Endothelial cell of umbilical vein (primary cell): ENCODE measurements at regions of chr5 and their contacts with region 1.

Region 1: GRCh38 chr5:75336625-75337339 is at the start of gene HMGCR:
- DNase-seq: peak; percentile 99
- H3K4me3 ChIP-seq: peak within 1 kb of the TSS; percentile 69 to 97 (median 82)
- H3K27ac ChIP-seq: peak within 1 kb of the TSS; percentile 60
- H3K4me1 ChIP-seq: peaks cover 26% of the 10 kb centered on the region
- H3K27me3 ChIP-seq: no peaks in the 10 kb centered on the region
- CTCF ChIP-seq: peak in 1 of 2 donors; percentile 16
- POLR2A ChIP-seq: peak; percentile 77
- total RNA-seq, gene HMGCR: 104 and 128 TPM in 2 replicates

Region 2: GRCh38 chr5:74934949-74935751 is 401.6 kb before region 1 on chr5:
- CTCF ChIA-PET with region 1: no interaction called
- POLR2A ChIA-PET with region 1: no interaction called
- dilution Hi-C with region 1: no loop called
- intact Hi-C with region 1: loop called (anchors 2 kb)
- DNase-seq: peak; percentile 95
- H3K4me3 ChIP-seq: peak overlapping the region in 1 of 3 experiments; percentile 6
- H3K27ac ChIP-seq: peak overlapping the region; percentile 13
- H3K4me1 ChIP-seq: peaks cover 24% of the 10 kb centered on the region
- H3K27me3 ChIP-seq: no peaks in the 10 kb centered on the region
- CTCF ChIP-seq: peak; percentile 23 to 37
- POLR2A ChIP-seq: no peak

Region 3: GRCh38 chr5:75358117-75358516 is 21.3 kb after region 1 on chr5:
- CTCF ChIA-PET with region 1: interaction called, 3 read pairs
- POLR2A ChIA-PET with region 1: no interaction called
- dilution Hi-C with region 1: no loop called
- intact Hi-C with region 1: loop called (anchors 1 kb)
- DNase-seq: no peak
- H3K4me3 ChIP-seq: no peak overlapping the region
- H3K27ac ChIP-seq: no peak overlapping the region
- H3K4me1 ChIP-seq: no peaks in the 10 kb centered on the region
- H3K27me3 ChIP-seq: no peaks in the 10 kb centered on the region
- CTCF ChIP-seq: no peak
- POLR2A ChIP-seq: no peak

Region 4: DNA sequence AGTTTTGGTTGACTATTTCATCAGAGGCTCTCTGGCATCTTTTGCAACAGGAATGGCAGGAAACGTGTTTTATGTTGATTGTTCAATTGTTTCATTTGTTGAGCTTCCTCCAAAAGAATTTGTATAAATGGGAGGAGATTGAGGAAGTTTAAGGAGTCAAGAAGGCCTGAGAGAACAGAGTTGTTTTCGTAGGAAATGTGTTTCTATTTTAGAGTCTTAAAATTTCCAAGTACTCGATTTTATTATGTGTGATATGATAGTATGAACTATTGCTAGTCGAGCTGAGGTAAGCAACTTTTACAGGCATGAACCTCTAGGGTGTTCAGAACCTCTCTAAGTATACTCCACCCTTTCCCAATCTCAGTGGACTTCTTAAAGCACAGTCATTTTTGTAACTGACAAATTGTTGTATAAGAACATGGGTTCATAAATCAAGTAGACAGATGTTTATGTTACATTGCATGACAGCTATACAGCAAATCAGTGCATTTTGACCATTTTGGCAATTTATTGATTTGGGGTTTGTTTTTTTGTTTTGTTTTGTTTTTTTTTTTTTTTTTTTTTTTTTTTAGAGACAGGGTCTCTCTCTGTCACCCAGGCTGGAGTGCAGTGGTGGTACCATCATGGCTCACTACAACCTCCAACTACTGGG is 222.3 kb after region 1 on chr5:
- CTCF ChIA-PET with region 1: no interaction called
- POLR2A ChIA-PET with region 1: no interaction called
- dilution Hi-C with region 1: no loop called
- intact Hi-C with region 1: loop called (anchors 2 kb)
- DNase-seq: peak; percentile 94
- H3K4me3 ChIP-seq: peak overlapping the region in 2 of 3 experiments; percentile 28 to 64
- H3K27ac ChIP-seq: peak overlapping the region; percentile 91
- H3K4me1 ChIP-seq: peaks cover 28% of the 10 kb centered on the region
- H3K27me3 ChIP-seq: no peaks in the 10 kb centered on the region
- CTCF ChIP-seq: no peak
- POLR2A ChIP-seq: no peak

Region 5: DNA sequence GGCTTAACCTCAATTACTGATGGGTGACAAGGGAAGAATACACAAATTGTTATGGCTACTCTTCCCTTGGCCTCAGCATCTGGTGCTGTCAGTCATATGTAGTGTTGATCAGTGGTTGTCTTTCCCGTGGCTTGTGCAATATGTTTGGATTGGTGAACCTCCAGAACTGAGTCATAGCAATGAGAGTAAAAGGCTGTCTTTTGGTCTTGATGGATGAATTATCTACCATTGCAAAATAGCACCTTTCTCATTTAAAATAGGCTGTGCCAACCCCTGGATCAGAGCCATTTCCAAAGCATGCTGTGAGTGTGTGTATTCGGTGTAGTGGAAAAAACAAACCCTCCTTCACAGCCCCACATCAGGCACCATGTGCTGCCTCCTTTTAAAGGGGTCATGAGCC is 1364.5 kb after region 1 on chr5:
- CTCF ChIA-PET with region 1: no interaction called
- POLR2A ChIA-PET with region 1: no interaction called
- dilution Hi-C with region 1: no loop called
- intact Hi-C with region 1: loop called (anchors 5 kb)
- DNase-seq: peak; percentile 45
- H3K4me3 ChIP-seq: no peak overlapping the region
- H3K27ac ChIP-seq: no peak overlapping the region
- H3K4me1 ChIP-seq: peaks cover 53% of the 10 kb centered on the region
- H3K27me3 ChIP-seq: no peaks in the 10 kb centered on the region
- CTCF ChIP-seq: no peak
- POLR2A ChIP-seq: no peak